CD4-positive, alpha-beta T cell (primary cell): ENCODE measurements at regions of chr2 and their contacts with region 1.

Region 1: DNA sequence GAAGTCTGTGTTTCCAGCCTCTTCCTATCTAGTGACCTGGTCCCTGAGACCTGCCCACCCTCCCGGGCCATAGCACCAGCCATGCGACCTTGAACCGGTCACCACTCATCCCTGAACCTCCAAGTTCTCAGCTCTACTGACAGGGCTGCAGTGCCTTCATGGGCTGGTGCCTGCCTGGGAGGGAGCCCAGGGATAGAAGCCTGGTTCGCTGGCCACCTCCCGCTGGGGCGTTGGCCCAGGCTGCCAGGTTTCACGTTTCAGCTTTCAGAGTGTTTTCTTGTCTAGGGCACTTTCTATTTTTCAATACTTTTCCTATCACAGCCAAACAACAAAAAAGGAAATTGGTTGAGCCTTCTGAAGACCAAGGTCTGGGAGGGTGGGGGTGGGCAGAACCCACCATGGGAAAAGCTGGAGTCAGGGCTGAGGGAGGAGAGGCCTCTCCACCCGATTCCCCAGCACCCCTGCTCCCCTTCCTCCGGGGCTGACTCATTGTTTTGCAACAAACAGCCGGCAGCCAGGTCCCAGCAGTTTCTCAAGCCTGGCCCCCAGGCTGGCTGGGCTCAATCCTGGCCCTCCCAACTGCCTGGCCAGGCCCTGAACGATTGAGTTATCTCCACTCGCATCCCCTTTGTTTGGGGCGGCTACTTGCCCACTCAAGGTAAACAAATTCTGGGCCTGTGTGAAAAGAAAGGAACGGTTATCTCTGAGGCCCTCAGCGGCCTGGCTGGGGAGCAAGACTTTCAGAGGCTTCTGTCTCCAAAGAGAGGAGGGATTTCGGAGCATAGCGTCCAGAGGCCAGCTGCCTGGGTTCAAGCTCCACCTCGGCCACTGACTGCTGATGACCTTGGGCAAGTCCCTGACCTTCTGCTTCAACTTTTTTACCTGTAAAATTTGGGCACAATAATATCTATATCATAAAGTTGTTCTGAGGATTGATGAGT is 47.5 kb downstream of the ZFP36L2 start:
- DNase-seq: peak in 9 of 14 experiments; percentile 32 to 72 (median 56)
- ATAC-seq: no peak
- H3K4me3 ChIP-seq: no peak overlapping the region
- H3K4me3 Mint-ChIP-seq: peak overlapping the region; percentile 70
- H3K27ac ChIP-seq: peak overlapping the region; percentile 54 to 77
- H3K27ac Mint-ChIP-seq: peak overlapping the region; percentile 97
- H3K4me1 ChIP-seq: peaks cover 80% of the 10 kb centered on the region
- H3K4me1 Mint-ChIP-seq: peaks cover 73% of the 10 kb centered on the region
- H3K27me3 ChIP-seq: no peaks in the 10 kb centered on the region
- H3K27me3 Mint-ChIP-seq: no peaks in the 10 kb centered on the region
- CTCF ChIP-seq: no peak

Region 2: DNA sequence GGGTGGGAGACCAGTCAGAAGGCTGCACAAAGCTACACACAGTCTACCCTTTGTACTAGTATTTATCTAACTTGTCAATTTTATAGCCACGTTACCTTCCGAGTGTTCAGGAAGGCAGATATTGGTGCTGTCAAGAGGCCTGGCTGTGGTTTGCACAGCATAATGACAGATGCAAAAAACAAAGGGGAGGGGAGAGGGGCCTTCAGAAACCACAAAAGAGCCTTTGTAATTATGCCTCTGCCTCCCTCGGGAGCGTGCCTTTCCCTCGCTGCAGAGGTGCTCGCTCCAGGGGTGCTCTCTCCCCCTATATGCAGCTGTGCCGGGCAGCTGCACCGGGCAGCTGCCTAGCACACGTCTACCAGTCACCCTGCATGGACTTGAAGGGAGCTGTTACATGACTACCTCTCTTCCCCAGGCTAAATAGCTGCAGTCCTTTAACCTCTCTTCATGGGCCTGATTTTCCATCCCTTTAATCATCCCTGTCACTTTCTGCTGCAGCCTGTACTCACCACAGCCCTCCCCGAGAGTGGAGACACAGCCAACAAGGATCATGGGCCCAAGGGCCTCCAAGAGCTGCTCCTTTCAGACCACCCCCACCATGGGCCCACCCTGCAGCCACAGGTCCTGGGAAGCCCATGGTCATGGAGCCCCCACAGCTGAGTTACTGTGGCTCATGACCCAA is 1299.5 kb before region 1 on chr2:
- CTCF ChIA-PET with region 1: no interaction called
- POLR2A ChIA-PET with region 1: no interaction called
- intact Hi-C with region 1: no loop called
- DNase-seq: no peak
- ATAC-seq: no peak
- H3K4me3 ChIP-seq: no peak overlapping the region
- H3K4me3 Mint-ChIP-seq: no peak overlapping the region
- H3K27ac ChIP-seq: no peak overlapping the region
- H3K27ac Mint-ChIP-seq: no peak overlapping the region
- H3K4me1 ChIP-seq: peaks cover 12% of the 10 kb centered on the region
- H3K4me1 Mint-ChIP-seq: peaks cover 4% of the 10 kb centered on the region
- H3K27me3 ChIP-seq: peaks cover 0 to 2% of the 10 kb centered on the region in 2 experiments
- H3K27me3 Mint-ChIP-seq: peaks cover 17% of the 10 kb centered on the region
- CTCF ChIP-seq: no peak

Region 3: DNA sequence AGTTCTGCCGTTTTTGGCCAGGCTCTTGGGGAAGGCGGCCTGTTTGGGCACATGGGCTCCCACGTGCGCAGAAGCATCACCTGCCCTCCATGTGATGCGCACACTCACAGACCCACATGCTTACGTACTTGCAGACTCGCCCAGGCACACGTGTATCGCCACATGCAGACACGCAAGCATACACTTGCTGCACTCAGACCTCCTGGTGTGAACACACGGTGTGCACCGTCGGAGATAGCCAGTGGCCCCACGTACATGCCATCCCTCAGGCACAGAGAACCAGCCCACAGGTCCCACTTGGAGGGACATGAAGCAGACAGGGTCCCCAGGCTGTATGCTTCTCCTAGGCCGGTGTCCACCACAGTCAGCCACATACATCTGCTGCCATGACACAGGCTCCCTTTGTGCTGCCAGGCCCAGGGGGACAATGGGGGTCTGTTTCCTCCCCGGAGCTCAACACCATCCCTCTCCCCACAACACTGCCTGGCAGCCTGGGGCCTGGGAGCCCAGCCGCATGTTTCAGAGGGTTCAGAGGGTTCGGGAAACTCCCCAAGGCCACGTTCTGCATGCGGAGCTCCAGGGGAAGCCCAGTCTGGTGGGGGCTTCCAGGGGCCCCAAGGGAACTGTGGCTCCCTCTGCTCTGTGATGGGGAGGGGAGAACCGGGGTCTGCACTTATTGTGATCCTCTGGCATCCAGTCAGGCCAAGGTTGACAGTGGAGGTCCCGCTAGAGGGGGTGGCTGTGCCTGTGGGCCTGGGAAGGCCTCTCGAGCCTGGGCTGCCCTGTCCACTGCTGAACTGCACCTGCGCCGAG is 178.4 kb before region 1 on chr2:
- CTCF ChIA-PET with region 1: no interaction called
- POLR2A ChIA-PET with region 1: no interaction called
- intact Hi-C with region 1: no loop called
- DNase-seq: no peak
- ATAC-seq: no peak
- H3K4me3 ChIP-seq: no peak overlapping the region
- H3K4me3 Mint-ChIP-seq: no peak overlapping the region
- H3K27ac ChIP-seq: no peak overlapping the region
- H3K27ac Mint-ChIP-seq: no peak overlapping the region
- H3K4me1 ChIP-seq: no peaks in the 10 kb centered on the region
- H3K4me1 Mint-ChIP-seq: no peaks in the 10 kb centered on the region
- H3K27me3 ChIP-seq: no peaks in the 10 kb centered on the region
- H3K27me3 Mint-ChIP-seq: no peaks in the 10 kb centered on the region
- CTCF ChIP-seq: no peak

Region 4: GRCh38 chr2:43149482-43150107 is 29.3 kb before region 1 on chr2:
- CTCF ChIA-PET with region 1: no interaction called
- POLR2A ChIA-PET with region 1: interaction called, 15 read pairs
- intact Hi-C with region 1: no loop called
- DNase-seq: peak in 4 of 14 experiments; percentile 53 to 70 (median 57)
- ATAC-seq: peak; percentile 72
- H3K4me3 ChIP-seq: no peak overlapping the region
- H3K4me3 Mint-ChIP-seq: peak overlapping the region; percentile 8
- H3K27ac ChIP-seq: no peak overlapping the region
- H3K27ac Mint-ChIP-seq: peak overlapping the region; percentile 73
- H3K4me1 ChIP-seq: peaks cover 61% of the 10 kb centered on the region
- H3K4me1 Mint-ChIP-seq: peaks cover 72% of the 10 kb centered on the region
- H3K27me3 ChIP-seq: no peaks in the 10 kb centered on the region
- H3K27me3 Mint-ChIP-seq: no peaks in the 10 kb centered on the region
- CTCF ChIP-seq: no peak

Region 5: GRCh38 chr2:43158259-43158880 is 20.5 kb before region 1 on chr2:
- CTCF ChIA-PET with region 1: interaction called, 3 read pairs
- POLR2A ChIA-PET with region 1: interaction called, 29 read pairs
- intact Hi-C with region 1: loop called in 1 of 2 experiments (anchors 1 kb)
- DNase-seq: peak in 11 of 14 experiments; percentile 43 to 85 (median 66)
- ATAC-seq: peak; percentile 67
- H3K4me3 ChIP-seq: peak overlapping the region; percentile 30
- H3K4me3 Mint-ChIP-seq: peak overlapping the region; percentile 77
- H3K27ac ChIP-seq: peak overlapping the region; percentile 91 to 94
- H3K27ac Mint-ChIP-seq: peak overlapping the region; percentile 98
- H3K4me1 ChIP-seq: peaks cover 89% of the 10 kb centered on the region
- H3K4me1 Mint-ChIP-seq: peaks cover 89% of the 10 kb centered on the region
- H3K27me3 ChIP-seq: no peaks in the 10 kb centered on the region
- H3K27me3 Mint-ChIP-seq: no peaks in the 10 kb centered on the region
- CTCF ChIP-seq: no peak

Region 6: DNA sequence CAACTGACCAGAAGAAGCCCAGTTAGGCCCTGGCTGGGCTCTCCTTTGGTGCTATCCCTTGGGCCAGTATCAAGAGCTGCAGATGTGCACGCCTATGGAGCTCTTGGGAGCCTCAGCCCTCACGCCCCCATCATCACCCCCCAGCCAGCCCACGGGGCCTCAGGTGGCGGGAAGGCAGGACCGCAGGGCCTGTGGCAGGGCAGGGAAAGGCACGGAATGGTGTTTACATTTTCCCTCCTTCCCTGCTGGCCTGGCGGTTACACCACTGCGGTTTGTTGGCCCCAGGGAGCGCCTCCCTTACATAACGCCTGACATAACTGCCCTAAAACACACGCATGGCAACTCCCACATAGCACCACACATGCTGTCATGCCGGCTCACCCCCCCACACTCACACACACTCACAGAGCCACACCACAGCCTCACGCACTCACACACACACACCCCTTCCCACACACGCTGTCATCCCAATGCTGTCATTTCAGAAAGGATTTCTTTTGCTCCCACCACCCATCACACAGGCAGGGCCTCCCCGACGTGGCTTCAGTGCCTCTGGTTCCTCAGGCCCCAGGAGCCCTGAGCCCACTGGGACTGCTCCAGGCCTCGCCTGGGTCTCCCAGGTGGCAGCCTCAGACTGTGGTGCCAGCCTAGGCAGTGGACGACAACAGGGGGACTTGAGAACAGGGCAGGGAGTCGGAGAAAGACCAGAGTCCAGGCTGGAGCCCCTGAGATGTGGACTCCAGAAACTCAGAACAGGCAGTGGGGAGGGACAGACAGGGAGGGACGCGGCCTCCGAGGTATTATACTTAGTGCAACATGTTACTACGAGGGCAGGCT is 31.8 kb after region 1 on chr2:
- CTCF ChIA-PET with region 1: no interaction called
- POLR2A ChIA-PET with region 1: interaction called, 790 read pairs
- intact Hi-C with region 1: no loop called
- DNase-seq: peak in 7 of 14 experiments; percentile 24 to 78 (median 60)
- ATAC-seq: peak; percentile 89
- H3K4me3 ChIP-seq: no peak overlapping the region
- H3K4me3 Mint-ChIP-seq: peak overlapping the region; percentile 63
- H3K27ac ChIP-seq: no peak overlapping the region
- H3K27ac Mint-ChIP-seq: peak overlapping the region; percentile 72
- H3K4me1 ChIP-seq: peaks cover 58% of the 10 kb centered on the region
- H3K4me1 Mint-ChIP-seq: peaks cover 49% of the 10 kb centered on the region
- H3K27me3 ChIP-seq: no peaks in the 10 kb centered on the region
- H3K27me3 Mint-ChIP-seq: no peaks in the 10 kb centered on the region
- CTCF ChIP-seq: no peak

Region 7: GRCh38 chr2:43219383-43220228 is 40.7 kb after region 1 on chr2:
- CTCF ChIA-PET with region 1: interaction called, 31 read pairs
- POLR2A ChIA-PET with region 1: interaction called, 790 read pairs
- intact Hi-C with region 1: loop called (anchors 1 kb)
- DNase-seq: peak; percentile 65 to 93 (median 76)
- ATAC-seq: peak; percentile 38
- H3K4me3 ChIP-seq: peak overlapping the region; percentile 97
- H3K4me3 Mint-ChIP-seq: peak overlapping the region; percentile 87
- H3K27ac ChIP-seq: peak overlapping the region; percentile 62 to 92
- H3K27ac Mint-ChIP-seq: peak overlapping the region; percentile 98
- H3K4me1 ChIP-seq: peaks cover 69% of the 10 kb centered on the region
- H3K4me1 Mint-ChIP-seq: peaks cover 62% of the 10 kb centered on the region
- H3K27me3 ChIP-seq: no peaks in the 10 kb centered on the region
- H3K27me3 Mint-ChIP-seq: peaks cover 19% of the 10 kb centered on the region
- CTCF ChIP-seq: no peak

Region 8: GRCh38 chr2:43333656-43334144 is 154.8 kb after region 1 on chr2:
- CTCF ChIA-PET with region 1: no interaction called
- POLR2A ChIA-PET with region 1: no interaction called
- intact Hi-C with region 1: no loop called
- DNase-seq: peak in 2 of 14 experiments; percentile 2 to 10
- ATAC-seq: no peak
- H3K4me3 ChIP-seq: no peak overlapping the region
- H3K4me3 Mint-ChIP-seq: no peak overlapping the region
- H3K27ac ChIP-seq: no peak overlapping the region
- H3K27ac Mint-ChIP-seq: no peak overlapping the region
- H3K4me1 ChIP-seq: peaks cover 4% of the 10 kb centered on the region
- H3K4me1 Mint-ChIP-seq: no peaks in the 10 kb centered on the region
- H3K27me3 ChIP-seq: no peaks in the 10 kb centered on the region
- H3K27me3 Mint-ChIP-seq: no peaks in the 10 kb centered on the region
- CTCF ChIP-seq: no peak